Left ventricle myocardium inferior (tissue), 1 donor: ENCODE measurements at regions of chr2 and their contacts with region 1.

Region 1: DNA sequence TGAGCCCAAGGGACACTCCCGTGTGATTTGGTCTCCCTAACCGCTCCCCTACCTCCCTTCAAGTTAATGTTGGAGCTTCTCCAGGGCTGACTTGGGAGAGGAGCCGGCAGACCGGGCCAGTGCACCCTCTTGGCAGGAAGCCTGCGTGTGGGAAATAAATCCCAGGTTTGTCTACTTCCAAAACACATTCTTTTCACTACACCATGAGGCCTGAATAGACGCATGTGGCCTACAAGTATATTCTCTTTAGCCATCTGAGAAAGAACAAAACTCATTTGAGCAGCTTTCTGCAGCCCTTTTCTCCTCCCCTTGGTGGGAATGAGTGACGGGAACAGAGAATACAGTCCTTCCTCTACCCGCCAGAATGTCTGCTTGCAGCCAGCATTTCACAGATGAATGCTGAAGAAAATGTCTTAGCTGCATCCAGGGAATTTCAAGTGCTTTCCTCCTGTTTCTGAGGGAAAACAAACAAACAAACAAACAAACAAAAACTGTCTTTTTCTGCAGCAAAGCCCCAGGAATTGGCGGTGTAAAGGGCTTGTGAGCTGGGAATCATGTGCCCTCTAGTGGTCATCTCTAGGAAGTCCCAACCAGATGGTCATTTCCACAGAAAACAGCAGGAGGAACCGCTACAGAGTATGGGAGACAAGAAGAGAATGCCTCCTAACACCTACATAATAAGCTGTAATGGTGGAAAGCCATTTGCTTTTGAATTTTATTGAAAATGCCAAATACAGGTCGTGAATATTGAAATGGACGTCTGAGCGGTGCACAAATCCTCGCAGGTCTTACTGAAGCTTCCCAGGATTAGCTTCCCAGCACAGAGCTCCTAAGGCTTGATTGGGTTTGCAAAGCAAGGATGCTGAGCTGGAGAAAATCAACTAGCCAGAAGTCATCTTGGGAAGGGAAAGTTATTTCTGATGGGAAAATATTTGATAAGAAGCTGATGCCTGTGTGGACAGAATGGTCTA is 41.2 kb upstream of the DAPL1 start:
- DNase-seq: peak; percentile 23
- H3K4me3 ChIP-seq: peak overlapping the region; percentile 55
- H3K27ac ChIP-seq: peak overlapping the region; percentile 51
- H3K4me1 ChIP-seq: peaks cover 11% of the 10 kb centered on the region
- H3K27me3 ChIP-seq: no peaks in the 10 kb centered on the region
- CTCF ChIP-seq: peak; percentile 94

Region 2: DNA sequence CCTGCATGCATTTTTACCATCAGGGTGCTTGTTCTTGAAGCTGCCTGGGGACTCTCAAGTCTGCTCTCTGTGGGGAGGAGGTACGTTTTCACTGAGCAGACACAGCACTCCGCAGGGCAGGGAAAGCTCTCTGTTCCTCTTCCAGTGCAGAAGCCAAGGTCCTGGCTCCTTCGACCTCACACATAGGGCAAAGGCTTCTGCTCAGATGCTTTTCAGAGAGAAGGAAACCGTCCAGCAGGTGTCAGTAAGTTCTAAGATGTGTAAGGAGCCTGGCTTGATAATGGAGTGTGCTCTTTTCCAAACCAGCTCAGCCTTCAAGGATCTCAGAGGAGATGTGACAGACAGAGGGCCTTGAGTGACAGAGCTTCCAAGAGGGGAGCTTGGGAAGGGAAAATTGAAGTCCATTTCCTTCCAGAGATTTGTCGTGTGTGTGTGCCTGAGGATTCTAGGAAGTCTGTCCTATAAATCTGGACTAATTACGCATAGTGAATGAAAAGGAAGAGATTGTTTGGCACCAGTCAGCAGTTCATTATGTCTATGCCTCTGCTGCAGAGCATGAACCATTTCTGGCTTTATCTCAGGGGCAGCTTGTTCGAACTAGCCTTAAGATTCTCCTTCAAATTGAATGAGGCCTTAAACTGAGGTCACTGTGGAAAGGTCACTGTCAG is 719.6 kb before region 1 on chr2:
- intact Hi-C with region 1: loop called (anchors 5 kb)
- DNase-seq: no peak
- H3K4me3 ChIP-seq: no peak overlapping the region
- H3K27ac ChIP-seq: no peak overlapping the region
- H3K4me1 ChIP-seq: peaks cover 6% of the 10 kb centered on the region
- H3K27me3 ChIP-seq: no peaks in the 10 kb centered on the region
- CTCF ChIP-seq: peak; percentile 60

Region 3: GRCh38 chr2:158179660-158180059 is 574.3 kb before region 1 on chr2:
- intact Hi-C with region 1: loop called (anchors 5 kb)
- DNase-seq: no peak
- H3K4me3 ChIP-seq: no peak overlapping the region
- H3K27ac ChIP-seq: no peak overlapping the region
- H3K4me1 ChIP-seq: peaks cover 6% of the 10 kb centered on the region
- H3K27me3 ChIP-seq: no peaks in the 10 kb centered on the region
- CTCF ChIP-seq: peak; percentile 57

Region 4: DNA sequence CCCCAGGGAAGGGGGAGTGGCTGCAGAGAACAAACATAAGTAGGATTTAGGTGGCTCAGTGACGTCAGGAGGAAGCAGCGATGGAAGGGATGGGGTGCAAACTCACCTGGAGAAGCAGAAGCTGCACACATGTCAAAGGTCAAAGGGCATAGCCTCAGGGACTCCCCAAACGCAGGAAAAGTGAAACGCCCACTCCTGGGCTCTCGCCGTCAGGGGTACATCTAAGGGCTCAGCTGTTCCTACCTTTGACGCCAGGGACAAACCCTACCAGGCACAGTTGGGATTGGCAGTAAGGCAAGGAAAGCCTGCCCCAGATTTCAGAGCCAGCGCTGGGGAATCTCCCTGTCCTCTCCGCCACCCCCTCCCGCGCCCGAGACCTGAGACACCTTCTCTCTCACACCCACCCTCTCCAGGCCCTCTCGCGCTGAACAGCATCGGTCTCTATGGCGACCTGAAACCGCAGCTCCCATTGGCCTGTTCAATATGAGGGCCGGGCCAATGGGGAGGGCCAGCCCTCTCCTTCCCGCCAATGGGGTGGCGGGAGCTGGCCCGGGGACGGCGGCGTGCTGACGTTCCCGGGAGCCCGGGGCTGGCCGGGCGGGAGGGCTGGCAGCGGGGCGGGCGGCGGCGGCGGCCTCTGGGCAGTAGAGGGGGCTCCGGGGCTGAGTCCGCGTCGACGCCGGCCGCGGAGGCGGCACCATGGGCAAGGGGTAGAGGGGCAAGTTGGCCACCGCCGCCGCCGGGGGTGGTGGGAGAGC is 297.4 kb before region 1 on chr2 and contains the starts of genes CCDC148 and PKP4:
- intact Hi-C with region 1: loop called (anchors 5 kb)
- DNase-seq: peak; percentile 89
- H3K4me3 ChIP-seq: peak within 1 kb of the TSS; percentile 98
- H3K27ac ChIP-seq: peak within 1 kb of the TSS; percentile 98
- H3K4me1 ChIP-seq: peaks cover 54% of the 10 kb centered on the region
- H3K27me3 ChIP-seq: no peaks in the 10 kb centered on the region
- CTCF ChIP-seq: peak; percentile 25
- total RNA-seq, gene CCDC148: 0.30 TPM
- total RNA-seq, gene PKP4: 47.6 TPM

Region 5: DNA sequence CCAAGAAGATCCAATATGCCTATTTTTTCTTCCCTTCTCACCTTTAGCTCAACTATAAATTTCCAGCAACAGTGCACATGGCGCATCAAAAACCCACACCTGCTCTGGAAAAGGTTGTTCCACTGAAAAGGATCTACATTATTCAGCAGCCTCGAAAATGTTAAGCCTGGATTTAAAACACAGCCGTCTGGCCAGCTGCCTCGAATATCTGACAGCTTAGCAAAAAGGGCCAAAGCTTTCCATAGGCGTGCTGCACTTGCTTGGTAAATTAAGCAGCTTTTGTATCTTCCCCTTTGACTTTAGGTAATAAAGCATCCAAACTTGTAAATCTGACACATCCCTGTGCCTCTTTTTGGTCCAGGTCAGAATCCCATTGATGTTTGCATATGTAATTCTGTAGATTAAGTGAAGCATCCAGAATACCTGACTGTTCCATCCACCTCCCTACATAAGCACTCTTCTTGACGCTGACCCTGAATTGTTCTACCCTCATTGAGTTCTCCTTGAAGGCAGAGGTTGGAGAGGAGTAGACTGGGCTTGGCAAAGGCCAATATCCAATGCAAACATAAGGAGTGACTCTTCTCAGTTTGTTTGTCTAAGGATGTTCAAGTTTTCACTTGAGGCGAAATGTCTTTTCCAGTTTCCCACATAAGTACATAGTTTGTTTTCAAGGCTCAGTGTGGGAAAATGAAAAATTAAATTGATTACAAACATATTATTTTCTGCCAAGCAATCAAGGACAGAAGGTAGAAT is 61.9 kb after region 1 on chr2:
- intact Hi-C with region 1: no loop called
- DNase-seq: no peak
- H3K4me3 ChIP-seq: no peak overlapping the region
- H3K27ac ChIP-seq: no peak overlapping the region
- H3K4me1 ChIP-seq: no peaks in the 10 kb centered on the region
- H3K27me3 ChIP-seq: no peaks in the 10 kb centered on the region
- CTCF ChIP-seq: no peak